Activated T-helper 1 cell treated with anti-CD3 and anti-CD28 coated beads, Interleukin-12 subunit alpha, Interleukin-12 subunit beta, Interleukin-2, Interleukin-4 antibody, amounts not matched to agents 30 ng/mL and 10 ng/mL and 1 ng/mL, durations not matched to agents 14 hours and 24 hours and 36 hours (primary cell): ENCODE measurements at regions of chr1 and their contacts with region 1.

Region 1: DNA sequence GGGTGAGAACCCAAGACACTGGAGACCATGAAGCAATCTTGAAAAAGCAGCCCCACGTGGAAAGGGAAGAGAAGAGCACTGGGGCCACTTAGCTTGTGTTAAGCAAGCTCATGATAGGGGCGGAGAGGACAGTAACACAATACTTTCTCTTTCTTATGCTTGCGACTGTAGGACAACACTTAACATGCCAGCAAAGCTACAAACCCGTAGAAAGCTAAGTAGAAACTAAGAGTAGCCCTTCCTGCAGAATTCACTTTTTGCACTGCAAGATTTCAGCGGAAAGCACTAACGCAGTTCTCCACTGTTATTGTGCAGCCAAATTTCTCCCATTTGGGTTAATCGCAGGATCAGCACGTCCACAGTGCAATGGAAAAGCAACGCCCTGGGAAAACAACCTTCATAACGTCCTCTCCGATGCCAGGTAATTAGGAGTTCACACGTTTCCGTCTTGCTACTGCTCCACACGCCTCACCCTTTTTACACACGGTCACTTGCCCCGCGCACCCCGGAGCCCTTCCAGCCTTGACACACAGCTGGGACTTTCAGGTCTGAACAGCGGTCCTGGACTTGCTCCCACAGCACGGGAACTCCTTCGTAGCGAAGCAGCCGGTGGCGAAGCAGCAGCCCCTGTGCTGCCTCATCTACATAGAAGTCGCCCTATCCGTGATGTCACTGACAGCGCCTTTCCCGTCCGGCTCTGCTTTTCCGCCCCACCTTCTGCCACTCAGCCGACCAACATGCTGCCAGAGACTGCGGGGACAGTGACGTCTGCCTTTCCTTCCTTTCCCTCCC is 148.6 kb downstream of the PPIAL4G start:
- DNase-seq: peak; percentile 64
- H3K4me3 Mint-ChIP-seq: peak overlapping the region; percentile 92
- H3K27ac Mint-ChIP-seq: peak overlapping the region; percentile 99
- H3K4me1 Mint-ChIP-seq: peaks cover 39% of the 10 kb centered on the region
- H3K27me3 Mint-ChIP-seq: peaks cover 30% of the 10 kb centered on the region

Region 2: GRCh38 chr1:147084273-147085096 is 1250.0 kb before region 1 on chr1:
- intact Hi-C with region 1: loop called (anchors 1 kb)
- DNase-seq: peak; percentile 70
- H3K4me3 Mint-ChIP-seq: peak overlapping the region; percentile 87
- H3K27ac Mint-ChIP-seq: peak overlapping the region; percentile 100
- H3K4me1 Mint-ChIP-seq: peaks cover 41% of the 10 kb centered on the region
- H3K27me3 Mint-ChIP-seq: peaks cover 68% of the 10 kb centered on the region

Region 3: DNA sequence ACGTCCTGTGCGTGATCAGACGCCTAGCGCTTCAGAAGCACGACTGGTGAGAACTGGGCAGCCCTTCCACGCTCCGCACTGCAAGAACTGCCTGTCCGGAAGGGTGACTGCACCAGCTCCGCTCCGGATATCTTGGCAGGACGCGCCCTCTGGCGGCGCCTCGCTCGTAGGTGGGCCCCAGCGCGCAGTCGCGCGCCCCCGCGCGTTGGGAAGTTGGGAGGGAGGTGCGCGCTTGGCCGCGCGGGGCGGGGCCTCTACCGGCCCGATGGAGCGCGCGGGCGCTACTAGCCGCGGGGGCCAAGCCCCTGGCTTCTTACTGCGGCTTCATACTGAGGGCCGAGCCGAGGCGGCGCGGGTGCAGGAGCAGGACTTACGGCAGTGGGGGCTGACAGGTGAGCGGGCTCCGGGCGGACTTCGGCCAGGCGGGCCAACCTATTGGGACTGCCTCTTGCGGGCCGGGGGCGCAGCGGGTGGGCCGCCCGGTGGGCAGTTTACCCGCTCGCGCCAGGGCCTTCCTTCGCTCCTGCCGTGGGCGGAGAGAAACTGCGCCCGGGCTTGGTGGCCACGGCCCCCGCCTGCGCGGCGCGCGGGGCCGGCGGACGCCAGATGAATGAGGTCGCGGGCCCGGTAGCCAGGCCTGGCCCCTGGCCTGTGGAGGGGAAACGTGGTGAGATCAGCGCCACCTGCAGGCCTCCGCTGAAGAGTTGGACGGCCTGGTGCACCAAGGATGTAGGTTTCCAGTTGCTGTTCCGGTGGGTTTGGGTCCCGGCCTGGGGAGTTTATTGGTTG is 1091.9 kb before region 1 on chr1 and contains the start of gene CHD1L:
- intact Hi-C with region 1: loop called (anchors 10 kb)
- DNase-seq: peak; percentile 92
- H3K4me3 Mint-ChIP-seq: peak within 1 kb of the TSS; percentile 95
- H3K27ac Mint-ChIP-seq: peak within 1 kb of the TSS; percentile 94
- H3K4me1 Mint-ChIP-seq: peaks cover 43% of the 10 kb centered on the region
- H3K27me3 Mint-ChIP-seq: no peaks in the 10 kb centered on the region
- total RNA-seq, gene CHD1L: 67.6 and 75.1 TPM in 2 replicates

Region 4: DNA sequence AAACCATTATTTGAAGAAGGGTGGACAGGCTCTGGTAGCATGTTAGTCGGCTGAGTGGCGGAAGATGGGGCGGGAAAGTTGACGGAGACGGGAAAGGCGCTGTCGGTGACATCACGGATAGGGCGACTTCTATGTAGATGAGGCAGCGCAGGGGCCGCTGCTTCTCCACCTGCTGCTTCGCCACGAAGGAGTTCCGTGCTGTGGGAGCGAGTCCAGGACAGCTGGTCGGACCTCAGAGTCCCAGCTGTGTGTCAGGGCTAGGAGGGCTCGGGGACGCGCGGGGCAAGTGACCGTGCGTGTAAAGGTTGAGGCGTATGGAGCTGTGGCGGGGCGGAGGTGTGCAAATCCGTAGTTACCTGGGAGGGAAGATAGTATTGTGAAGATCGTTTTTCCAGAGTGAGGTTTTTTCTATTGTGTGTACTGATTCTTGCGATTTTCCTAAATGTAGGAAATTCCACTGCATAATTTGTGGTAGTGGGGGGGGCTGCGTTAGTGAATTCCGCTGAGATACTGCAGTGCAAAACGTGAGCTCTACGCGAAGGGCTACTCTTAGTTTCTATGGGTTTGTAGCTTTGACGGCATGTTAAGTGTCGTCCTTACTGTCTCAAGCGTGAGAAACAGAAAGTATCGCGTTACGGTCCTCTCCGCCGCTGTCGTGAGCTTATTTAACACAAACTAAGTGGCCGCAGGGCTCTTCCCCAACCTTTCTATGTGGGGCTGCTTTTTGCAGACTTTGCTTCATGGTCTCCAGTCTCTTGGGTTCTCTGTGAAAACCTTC is 71.2 kb before region 1 on chr1:
- intact Hi-C with region 1: loop called (anchors 2 kb)
- DNase-seq: peak; percentile 45
- H3K4me3 Mint-ChIP-seq: peak overlapping the region; percentile 91
- H3K27ac Mint-ChIP-seq: peak overlapping the region; percentile 90
- H3K4me1 Mint-ChIP-seq: peaks cover 22% of the 10 kb centered on the region
- H3K27me3 Mint-ChIP-seq: peaks cover 25% of the 10 kb centered on the region

Region 5: DNA sequence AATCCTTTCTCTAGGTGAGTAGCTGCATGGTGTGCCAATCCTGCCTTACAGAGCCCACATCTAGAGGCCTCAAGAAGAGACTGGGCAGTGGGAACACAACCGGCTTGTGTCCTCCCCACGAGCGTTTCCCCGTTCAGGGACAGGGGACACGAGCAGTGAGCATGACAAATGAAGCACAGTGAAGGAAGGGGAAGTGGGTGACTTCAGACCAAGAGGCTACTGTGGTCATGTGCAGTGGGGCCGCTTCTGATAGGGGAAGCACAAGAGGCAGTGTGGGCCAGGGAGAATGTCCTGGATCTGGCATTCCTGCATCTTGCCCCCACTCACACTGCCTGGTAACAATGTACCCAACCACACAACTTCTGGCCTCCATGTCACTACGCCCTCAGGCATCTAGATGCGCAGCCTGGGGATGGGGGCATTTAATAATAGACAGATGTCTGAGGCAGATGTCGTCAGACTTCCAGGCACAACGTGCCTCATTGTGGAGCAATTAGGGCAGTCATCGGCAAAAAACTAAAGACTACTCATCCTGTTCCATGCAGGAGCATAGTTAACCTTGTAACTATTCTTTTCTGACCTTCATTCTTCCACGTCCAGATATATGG is 26.8 kb before region 1 on chr1:
- intact Hi-C with region 1: loop called (anchors 1 kb)
- DNase-seq: no peak
- H3K4me3 Mint-ChIP-seq: no peak overlapping the region
- H3K27ac Mint-ChIP-seq: no peak overlapping the region
- H3K4me1 Mint-ChIP-seq: peaks cover 36% of the 10 kb centered on the region
- H3K27me3 Mint-ChIP-seq: peaks cover 39% of the 10 kb centered on the region

Region 6: DNA sequence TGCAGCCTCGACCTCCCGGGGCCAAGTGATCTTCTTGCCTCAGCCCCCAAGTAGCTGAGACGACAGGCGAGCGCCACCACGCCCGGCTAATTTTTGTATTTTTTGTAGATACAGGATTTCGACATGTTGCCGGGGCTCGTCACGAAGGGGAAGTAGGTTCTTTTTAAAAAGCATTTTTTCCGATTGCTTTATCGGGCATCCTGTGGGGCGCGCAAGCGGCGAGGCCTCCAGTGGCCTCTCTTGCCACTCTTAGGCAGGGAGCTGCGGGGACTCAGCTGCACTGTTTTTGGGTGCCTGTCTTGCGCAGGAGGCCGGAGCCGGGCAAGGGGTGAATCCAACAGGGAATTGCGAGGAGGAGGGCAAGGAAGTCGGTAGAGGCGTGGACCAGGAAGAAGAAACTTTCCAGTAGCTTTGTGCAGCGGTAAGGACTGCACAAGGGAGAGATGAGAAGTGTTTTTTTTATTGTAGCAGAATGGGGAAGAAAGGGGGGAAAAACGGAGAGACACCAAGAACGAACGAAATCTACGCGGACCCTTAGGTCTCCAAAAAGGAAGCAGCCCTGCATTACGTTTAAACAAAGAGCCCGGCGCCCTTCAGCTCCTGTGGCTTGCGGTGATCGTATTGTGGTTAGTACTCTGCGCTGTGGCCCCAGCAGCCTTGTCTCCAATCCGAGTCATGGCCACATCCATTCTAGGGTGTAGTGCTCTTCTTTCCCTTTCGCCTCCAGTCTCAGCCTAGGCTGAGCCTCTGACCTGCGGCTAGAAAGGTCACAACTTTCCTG is 16.2 kb before region 1 on chr1:
- intact Hi-C with region 1: loop called (anchors 1 kb)
- DNase-seq: peak; percentile 73
- H3K4me3 Mint-ChIP-seq: peak overlapping the region; percentile 89
- H3K27ac Mint-ChIP-seq: peak overlapping the region; percentile 86
- H3K4me1 Mint-ChIP-seq: peaks cover 41% of the 10 kb centered on the region
- H3K27me3 Mint-ChIP-seq: peaks cover 32% of the 10 kb centered on the region

Region 7: DNA sequence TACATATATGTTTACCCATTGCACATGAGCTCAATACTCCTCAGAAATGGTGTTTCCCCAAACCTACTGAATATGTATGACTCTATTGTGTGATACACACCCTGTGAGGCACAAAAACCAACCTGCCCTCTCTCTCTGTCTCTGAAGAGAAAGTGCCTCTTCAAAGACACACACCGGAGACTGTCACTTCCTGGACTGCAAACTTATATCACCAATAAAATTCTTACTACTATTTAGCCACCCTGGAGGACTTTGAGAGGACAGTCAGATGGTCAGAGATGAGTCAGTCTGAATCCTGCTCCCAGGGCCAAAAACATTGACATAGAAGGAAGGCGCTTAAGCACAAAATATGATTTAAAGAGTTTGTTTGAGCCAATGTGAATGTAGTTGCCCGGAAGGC is 38.2 kb after region 1 on chr1:
- intact Hi-C with region 1: no loop called
- DNase-seq: peak; percentile 38
- H3K4me3 Mint-ChIP-seq: peak overlapping the region; percentile 78
- H3K27ac Mint-ChIP-seq: peak overlapping the region; percentile 98
- H3K4me1 Mint-ChIP-seq: peaks cover 28% of the 10 kb centered on the region
- H3K27me3 Mint-ChIP-seq: peaks cover 5% of the 10 kb centered on the region